ENCODE measurements at regions of chr9 and their contacts with region 1.

Region 1: DNA sequence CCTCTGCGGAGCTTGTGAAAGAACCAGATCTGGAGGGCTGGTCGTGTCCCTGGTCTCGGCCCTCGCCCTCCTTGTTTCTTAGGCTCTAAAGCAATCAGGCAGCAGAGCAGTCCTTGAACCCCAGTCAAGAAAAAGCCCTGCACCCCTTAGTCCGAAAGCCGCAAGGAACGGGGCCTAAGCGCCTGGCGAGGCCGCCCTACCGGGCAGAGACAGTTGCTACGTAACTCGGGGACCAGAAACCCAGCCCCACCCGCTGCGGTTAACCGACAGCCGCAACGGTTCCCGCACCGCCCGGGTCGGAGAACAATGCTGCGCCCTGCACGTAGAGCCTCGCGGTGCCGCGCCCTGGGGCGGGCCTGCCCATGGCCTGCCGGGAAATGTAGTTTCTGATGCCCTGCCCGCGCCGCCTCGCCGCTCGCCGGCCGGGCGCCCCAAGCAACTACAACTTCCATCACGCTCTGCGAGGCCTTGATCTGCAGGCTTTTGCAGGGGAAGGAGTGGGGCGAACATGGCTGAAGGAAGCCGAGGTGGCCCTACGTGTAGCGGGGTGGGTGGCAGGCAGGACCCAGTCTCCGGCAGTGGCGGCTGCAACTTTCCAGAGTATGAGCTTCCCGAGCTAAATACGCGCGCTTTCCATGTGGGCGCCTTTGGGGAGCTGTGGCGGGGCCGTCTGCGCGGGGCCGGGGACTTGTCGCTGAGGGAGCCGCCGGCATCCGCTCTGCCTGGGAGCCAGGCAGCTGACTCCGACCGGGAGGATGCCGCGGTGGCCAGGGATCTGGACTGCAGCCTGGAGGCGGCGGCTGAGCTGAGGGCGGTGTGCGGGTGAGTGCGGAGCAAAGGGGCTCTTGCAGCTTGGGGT is at the start of gene SNAPC3:
- DNase-seq: peak; percentile 98
- H3K4me3 ChIP-seq: peak within 1 kb of the TSS; percentile 80 to 100 (median 94)
- H3K27ac ChIP-seq: peak within 1 kb of the TSS; percentile 80
- H3K4me1 ChIP-seq: peaks cover 11% of the 10 kb centered on the region
- H3K27me3 ChIP-seq: no peaks in the 10 kb centered on the region
- CTCF ChIP-seq: no peak
- POLR2A ChIP-seq: peak; percentile 88
- total RNA-seq, gene SNAPC3: 30.9 and 32.6 TPM in 2 replicates

Region 2: DNA sequence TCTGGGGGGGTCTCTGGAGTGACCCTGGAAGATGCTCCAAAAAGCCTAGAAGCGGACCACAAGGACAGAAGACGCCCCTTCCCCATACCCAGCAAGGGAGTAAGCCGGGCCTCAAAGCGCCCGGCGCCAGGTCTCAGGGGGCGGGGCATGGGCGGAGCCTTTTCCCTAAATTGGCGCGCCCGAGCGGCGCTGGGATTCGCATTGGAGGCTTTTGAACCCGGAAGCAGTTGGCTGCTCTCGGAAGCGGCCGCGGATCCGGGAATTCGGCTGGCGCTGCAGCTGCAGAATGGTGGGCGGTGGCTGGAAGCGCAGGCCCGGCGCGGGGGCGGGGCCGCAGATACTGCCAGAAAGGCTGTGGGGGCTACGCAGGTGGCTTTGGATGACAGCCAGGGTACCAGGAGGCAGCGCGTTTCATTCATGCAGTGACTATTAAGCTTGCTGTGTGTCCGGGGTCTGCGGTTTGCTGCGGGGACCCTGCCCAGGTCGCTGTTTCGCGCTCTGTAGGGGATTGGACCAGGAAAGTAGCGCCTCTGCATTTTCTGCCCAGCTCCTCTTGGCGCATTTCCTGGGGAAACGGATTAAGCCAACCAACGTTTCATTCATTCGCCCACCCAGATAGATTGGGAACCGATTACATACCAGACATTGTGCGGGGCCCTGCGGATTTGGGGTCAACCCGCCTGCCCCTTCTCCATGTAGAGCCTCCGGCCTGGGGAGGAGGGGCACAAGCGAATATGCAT is 429.4 kb before region 1 on chr9:
- CTCF ChIA-PET with region 1: no interaction called
- POLR2A ChIA-PET with region 1: no interaction called
- dilution Hi-C with region 1: no loop called
- intact Hi-C with region 1: loop called (anchors 5 kb)
- DNase-seq: peak; percentile 84
- H3K4me3 ChIP-seq: peak overlapping the region; percentile 33 to 69 (median 45)
- H3K27ac ChIP-seq: peak overlapping the region; percentile 88
- H3K4me1 ChIP-seq: peaks cover 15% of the 10 kb centered on the region
- H3K27me3 ChIP-seq: no peaks in the 10 kb centered on the region
- CTCF ChIP-seq: no peak
- POLR2A ChIP-seq: peak; percentile 62

Region 3: DNA sequence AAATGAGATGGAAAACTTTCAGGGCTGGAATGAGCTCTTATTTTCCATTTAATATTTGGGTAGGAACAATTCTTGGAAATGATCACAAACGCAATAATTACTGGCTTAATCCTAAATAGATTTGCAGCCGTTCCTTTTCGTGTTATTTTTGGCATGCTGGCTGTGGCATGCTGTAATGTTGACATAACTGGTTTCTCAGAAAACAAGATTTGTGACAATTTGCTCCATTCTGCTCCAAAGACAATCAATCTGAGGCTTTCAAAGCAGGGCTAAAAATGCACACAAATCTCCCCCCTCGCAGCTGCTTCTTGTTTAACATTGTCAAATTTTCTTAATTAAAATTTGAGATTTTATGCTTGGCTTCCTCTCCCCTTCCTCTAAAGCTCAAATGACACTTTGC is 266.8 kb before region 1 on chr9:
- CTCF ChIA-PET with region 1: no interaction called
- POLR2A ChIA-PET with region 1: no interaction called
- dilution Hi-C with region 1: no loop called
- intact Hi-C with region 1: loop called (anchors 5 kb)
- DNase-seq: peak; percentile 97
- H3K4me3 ChIP-seq: no peak overlapping the region
- H3K27ac ChIP-seq: peak overlapping the region; percentile 79
- H3K4me1 ChIP-seq: peaks cover 36% of the 10 kb centered on the region
- H3K27me3 ChIP-seq: no peaks in the 10 kb centered on the region
- CTCF ChIP-seq: no peak
- POLR2A ChIP-seq: no peak

Region 4: GRCh38 chr9:15249042-15249818 is 173.4 kb before region 1 on chr9:
- CTCF ChIA-PET with region 1: no interaction called
- POLR2A ChIA-PET with region 1: no interaction called
- dilution Hi-C with region 1: no loop called
- intact Hi-C with region 1: loop called (anchors 1 kb)
- DNase-seq: peak; percentile 69
- H3K4me3 ChIP-seq: no peak overlapping the region
- H3K27ac ChIP-seq: peak overlapping the region; percentile 68
- H3K4me1 ChIP-seq: peaks cover 42% of the 10 kb centered on the region
- H3K27me3 ChIP-seq: no peaks in the 10 kb centered on the region
- CTCF ChIP-seq: no peak
- POLR2A ChIP-seq: no peak

Region 5: DNA sequence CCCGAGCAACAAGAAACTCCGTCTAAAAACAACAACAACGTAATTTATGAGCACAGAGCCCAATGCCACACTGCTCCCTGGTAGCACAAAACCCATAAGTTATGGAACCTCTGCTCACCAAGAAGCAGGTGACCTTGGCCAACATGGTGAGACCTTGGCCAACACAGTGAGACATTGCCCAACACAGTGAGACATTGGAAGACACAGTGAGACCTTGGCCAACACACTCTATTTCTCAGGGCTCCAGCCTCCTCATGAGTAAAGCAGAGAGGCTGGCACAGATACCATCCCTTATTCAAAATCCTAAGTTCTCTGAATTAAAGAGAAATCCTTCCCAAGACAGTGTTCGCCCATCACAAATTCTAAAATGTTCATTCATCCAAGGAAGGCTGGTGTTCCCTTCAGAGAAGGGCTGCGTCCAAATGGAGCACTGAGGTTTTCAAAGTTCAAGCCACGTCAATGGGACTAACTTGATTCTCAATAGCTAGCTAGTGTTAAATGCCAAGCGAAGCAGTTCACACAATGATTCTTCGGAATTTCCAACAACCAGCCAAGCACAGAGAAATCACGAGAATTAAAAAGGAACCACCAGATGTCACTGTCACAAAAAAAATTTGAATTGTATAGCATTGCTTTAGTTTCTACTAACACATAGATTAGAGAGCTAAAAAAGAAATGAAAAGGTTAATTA is 145.1 kb before region 1 on chr9:
- CTCF ChIA-PET with region 1: interaction called, 9 read pairs
- POLR2A ChIA-PET with region 1: no interaction called
- dilution Hi-C with region 1: no loop called
- intact Hi-C with region 1: loop called (anchors 1 kb)
- DNase-seq: peak; percentile 48
- H3K4me3 ChIP-seq: no peak overlapping the region
- H3K27ac ChIP-seq: no peak overlapping the region
- H3K4me1 ChIP-seq: no peaks in the 10 kb centered on the region
- H3K27me3 ChIP-seq: no peaks in the 10 kb centered on the region
- CTCF ChIP-seq: peak in 1 of 2 donors; percentile 19
- POLR2A ChIP-seq: no peak

Region 6: GRCh38 chr9:15295761-15296405 is 126.7 kb before region 1 on chr9:
- CTCF ChIA-PET with region 1: no interaction called
- POLR2A ChIA-PET with region 1: no interaction called
- dilution Hi-C with region 1: no loop called
- intact Hi-C with region 1: loop called (anchors 2 kb)
- DNase-seq: peak; percentile 87
- H3K4me3 ChIP-seq: peak overlapping the region; percentile 29 to 85 (median 55)
- H3K27ac ChIP-seq: peak overlapping the region; percentile 90
- H3K4me1 ChIP-seq: peaks cover 9% of the 10 kb centered on the region
- H3K27me3 ChIP-seq: no peaks in the 10 kb centered on the region
- CTCF ChIP-seq: no peak
- POLR2A ChIP-seq: no peak

Region 7: GRCh38 chr9:15552636-15553527 is 130.3 kb after region 1 on chr9 and contains the start of gene CCDC171:
- CTCF ChIA-PET with region 1: no interaction called
- POLR2A ChIA-PET with region 1: no interaction called
- dilution Hi-C with region 1: no loop called
- intact Hi-C with region 1: loop called (anchors 1 kb)
- DNase-seq: peak; percentile 94
- H3K4me3 ChIP-seq: peak within 1 kb of the TSS; percentile 56 to 92 (median 79)
- H3K27ac ChIP-seq: peak within 1 kb of the TSS; percentile 2
- H3K4me1 ChIP-seq: peaks cover 8% of the 10 kb centered on the region
- H3K27me3 ChIP-seq: no peaks in the 10 kb centered on the region
- CTCF ChIP-seq: no peak
- POLR2A ChIP-seq: peak; percentile 93
- total RNA-seq, gene CCDC171: 1.4 and 1.6 TPM in 2 replicates